CD4-positive, alpha-beta T cell (primary cell): ENCODE measurements at regions of chr12 and their contacts with region 1.

Region 1: DNA sequence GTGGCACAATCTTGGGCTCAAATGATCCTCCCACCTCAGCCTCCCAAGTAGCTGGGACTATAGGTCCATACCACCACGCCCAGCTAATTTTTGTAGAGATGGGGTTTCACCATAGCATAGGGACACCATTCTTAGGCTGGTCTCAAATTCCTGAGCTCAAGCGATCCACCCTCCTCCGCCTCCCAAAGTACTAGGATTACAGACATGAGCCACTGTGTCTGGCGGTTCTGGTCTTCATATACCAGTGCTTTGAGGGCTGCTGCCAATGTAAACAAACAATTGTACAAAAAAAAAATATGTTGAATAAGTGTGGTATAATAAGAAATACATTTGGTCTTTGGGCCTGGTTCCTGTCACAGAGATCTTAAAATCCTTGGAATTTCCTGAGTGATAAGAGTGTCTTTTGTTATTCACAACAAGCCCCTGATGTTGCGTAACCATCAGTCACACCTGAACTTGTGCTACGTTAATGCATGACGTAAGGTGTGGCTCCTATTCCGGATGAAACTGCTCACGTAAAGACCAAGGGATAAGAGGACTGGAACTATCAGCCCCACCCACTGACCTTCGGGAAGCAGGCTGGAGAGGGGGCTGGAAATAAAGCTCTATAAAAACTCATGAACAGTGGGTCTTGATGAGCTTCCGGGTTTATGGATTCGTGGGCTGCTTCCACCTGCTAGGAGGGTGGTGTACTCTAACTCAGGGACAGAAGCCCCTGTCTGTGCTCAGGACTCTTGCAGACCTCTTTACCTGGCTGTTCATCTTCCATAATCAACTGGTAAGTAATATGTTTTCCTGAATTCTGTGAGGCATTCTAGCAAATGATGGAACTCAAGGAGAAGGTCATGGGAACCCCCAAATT is 16.5 kb upstream of the RIMKLB start:
- DNase-seq: no peak
- ATAC-seq: no peak
- H3K4me3 ChIP-seq: no peak overlapping the region
- H3K4me3 Mint-ChIP-seq: no peak overlapping the region
- H3K27ac ChIP-seq: no peak overlapping the region
- H3K27ac Mint-ChIP-seq: no peak overlapping the region
- H3K4me1 ChIP-seq: peaks cover 5% of the 10 kb centered on the region
- H3K4me1 Mint-ChIP-seq: peaks cover 5% of the 10 kb centered on the region
- H3K27me3 ChIP-seq: no peaks in the 10 kb centered on the region
- H3K27me3 Mint-ChIP-seq: no peaks in the 10 kb centered on the region
- CTCF ChIP-seq: no peak

Region 2: GRCh38 chr12:6700646-6701051 is 1980.6 kb before region 1 on chr12 and contains the start of gene PIANP:
- CTCF ChIA-PET with region 1: no interaction called
- POLR2A ChIA-PET with region 1: no interaction called
- intact Hi-C with region 1: no loop called
- DNase-seq: peak; percentile 34 to 77 (median 56)
- ATAC-seq: peak; percentile 93
- H3K4me3 ChIP-seq: peak within 1 kb of the TSS; percentile 43
- H3K4me3 Mint-ChIP-seq: peak within 1 kb of the TSS; percentile 86
- H3K27ac ChIP-seq: no peak within 1 kb of the TSS
- H3K27ac Mint-ChIP-seq: no peak within 1 kb of the TSS
- H3K4me1 ChIP-seq: peaks cover 26% of the 10 kb centered on the region
- H3K4me1 Mint-ChIP-seq: peaks cover 26% of the 10 kb centered on the region
- H3K27me3 ChIP-seq: peaks cover 32 to 42% of the 10 kb centered on the region in 2 experiments
- H3K27me3 Mint-ChIP-seq: peaks cover 57% of the 10 kb centered on the region
- CTCF ChIP-seq: no peak
- total RNA-seq, gene PIANP: 0.87 to 0.99 TPM

Region 3: DNA sequence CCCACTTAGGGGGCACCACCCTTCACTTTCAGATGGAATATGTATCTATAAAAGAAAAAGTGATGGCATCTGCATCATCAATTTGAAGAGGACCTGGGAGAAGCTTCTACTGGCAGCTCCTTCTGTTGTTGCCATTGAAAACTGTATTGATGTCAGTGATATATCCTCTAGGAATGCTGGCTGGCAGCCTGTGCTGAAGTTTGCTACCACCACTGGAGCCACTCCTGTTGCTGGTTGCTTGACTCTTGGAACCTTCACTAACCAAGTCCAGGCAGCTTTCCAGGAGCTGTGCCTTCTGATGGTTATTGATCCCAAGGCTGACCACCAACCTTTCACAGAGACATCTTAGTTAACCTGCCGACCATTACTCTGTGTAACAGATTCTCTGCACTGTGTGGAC is 61.2 kb after region 1 on chr12:
- CTCF ChIA-PET with region 1: no interaction called
- POLR2A ChIA-PET with region 1: no interaction called
- intact Hi-C with region 1: no loop called
- DNase-seq: no peak
- ATAC-seq: no peak
- H3K4me3 ChIP-seq: no peak overlapping the region
- H3K4me3 Mint-ChIP-seq: no peak overlapping the region
- H3K27ac ChIP-seq: no peak overlapping the region
- H3K27ac Mint-ChIP-seq: no peak overlapping the region
- H3K4me1 ChIP-seq: no peaks in the 10 kb centered on the region
- H3K4me1 Mint-ChIP-seq: no peaks in the 10 kb centered on the region
- H3K27me3 ChIP-seq: no peaks in the 10 kb centered on the region
- H3K27me3 Mint-ChIP-seq: no peaks in the 10 kb centered on the region
- CTCF ChIP-seq: no peak

Region 4: DNA sequence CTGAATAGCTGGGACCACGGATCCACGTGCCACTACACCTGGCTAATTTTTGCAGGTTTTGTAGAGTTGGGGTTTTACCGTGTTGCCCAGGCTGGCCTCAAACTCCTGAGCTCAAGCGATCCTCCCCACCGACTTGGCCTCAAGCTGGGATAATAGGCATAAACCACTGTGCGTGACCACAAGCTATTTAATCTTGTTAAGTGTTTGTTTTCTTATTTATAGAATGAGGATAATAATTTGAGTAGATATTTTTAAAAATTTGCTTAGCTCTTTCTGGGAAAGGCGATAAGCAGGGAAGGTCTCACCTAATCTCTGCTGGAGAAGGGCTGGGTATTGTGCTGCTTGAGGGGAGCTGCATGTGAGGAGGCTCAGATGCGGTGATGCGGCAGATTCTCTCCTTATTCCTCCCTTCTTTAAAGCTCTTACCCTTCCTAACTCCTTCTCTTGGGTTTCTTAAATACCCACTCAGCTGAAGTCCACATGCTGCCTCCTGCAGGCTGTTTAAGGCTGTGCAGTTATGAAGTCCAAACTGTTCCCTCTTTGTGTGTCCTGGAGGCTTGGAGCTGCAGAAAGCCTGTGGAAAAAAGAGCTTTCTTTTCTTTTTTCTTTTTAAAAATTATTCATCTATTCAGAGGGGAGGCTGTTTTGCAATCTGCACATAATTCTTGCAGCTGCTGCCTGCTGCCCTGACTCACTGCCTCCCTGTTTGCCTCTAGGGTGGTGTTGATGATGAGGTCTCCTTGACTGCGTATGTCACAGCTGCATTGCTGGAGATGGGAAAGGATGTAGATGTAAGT is 179.1 kb after region 1 on chr12:
- CTCF ChIA-PET with region 1: interaction called, 6 read pairs
- POLR2A ChIA-PET with region 1: no interaction called
- intact Hi-C with region 1: loop called in 1 of 2 experiments (anchors 2 kb)
- DNase-seq: peak in 12 of 14 experiments; percentile 3 to 65 (median 22)
- ATAC-seq: no peak
- H3K4me3 ChIP-seq: no peak overlapping the region
- H3K4me3 Mint-ChIP-seq: no peak overlapping the region
- H3K27ac ChIP-seq: no peak overlapping the region
- H3K27ac Mint-ChIP-seq: no peak overlapping the region
- H3K4me1 ChIP-seq: no peaks in the 10 kb centered on the region
- H3K4me1 Mint-ChIP-seq: no peaks in the 10 kb centered on the region
- H3K27me3 ChIP-seq: no peaks in the 10 kb centered on the region
- H3K27me3 Mint-ChIP-seq: no peaks in the 10 kb centered on the region
- CTCF ChIP-seq: peak; percentile 50

Region 5: GRCh38 chr12:8890313-8891085 is 209.2 kb after region 1 on chr12:
- CTCF ChIA-PET with region 1: interaction called, 9 read pairs
- POLR2A ChIA-PET with region 1: no interaction called
- intact Hi-C with region 1: loop called (anchors 1 kb)
- DNase-seq: peak; percentile 38 to 81 (median 52)
- ATAC-seq: peak; percentile 88
- H3K4me3 ChIP-seq: peak overlapping the region; percentile 57
- H3K4me3 Mint-ChIP-seq: peak overlapping the region; percentile 92
- H3K27ac ChIP-seq: no peak overlapping the region
- H3K27ac Mint-ChIP-seq: peak overlapping the region; percentile 29
- H3K4me1 ChIP-seq: peaks cover 3% of the 10 kb centered on the region
- H3K4me1 Mint-ChIP-seq: peaks cover 5% of the 10 kb centered on the region
- H3K27me3 ChIP-seq: no peaks in the 10 kb centered on the region
- H3K27me3 Mint-ChIP-seq: no peaks in the 10 kb centered on the region
- CTCF ChIP-seq: peak; percentile 93